PC-3 (cell line): ENCODE measurements at regions of chr3 and their contacts with region 1.

Region 1: GRCh38 chr3:33629219-33629618 is 88.8 kb downstream of the CLASP2 start:
- DNase-seq: no peak
- ATAC-seq: no peak
- H3K4me3 ChIP-seq: no peak overlapping the region
- H3K27ac ChIP-seq: no peak overlapping the region
- H3K4me1 ChIP-seq: no peaks in the 10 kb centered on the region
- H3K27me3 ChIP-seq: no peaks in the 10 kb centered on the region
- CTCF ChIP-seq: no peak

Region 2: GRCh38 chr3:33578325-33579177 is 50.7 kb before region 1 on chr3:
- CTCF ChIA-PET with region 1: no interaction called
- POLR2A ChIA-PET with region 1: no interaction called
- intact Hi-C with region 1: loop called (anchors 5 kb)
- DNase-seq: peak; percentile 90
- ATAC-seq: peak; percentile 66
- H3K4me3 ChIP-seq: peak overlapping the region; percentile 51
- H3K27ac ChIP-seq: peak overlapping the region; percentile 99
- H3K4me1 ChIP-seq: peaks cover 62% of the 10 kb centered on the region
- H3K27me3 ChIP-seq: no peaks in the 10 kb centered on the region
- CTCF ChIP-seq: no peak

Region 3: DNA sequence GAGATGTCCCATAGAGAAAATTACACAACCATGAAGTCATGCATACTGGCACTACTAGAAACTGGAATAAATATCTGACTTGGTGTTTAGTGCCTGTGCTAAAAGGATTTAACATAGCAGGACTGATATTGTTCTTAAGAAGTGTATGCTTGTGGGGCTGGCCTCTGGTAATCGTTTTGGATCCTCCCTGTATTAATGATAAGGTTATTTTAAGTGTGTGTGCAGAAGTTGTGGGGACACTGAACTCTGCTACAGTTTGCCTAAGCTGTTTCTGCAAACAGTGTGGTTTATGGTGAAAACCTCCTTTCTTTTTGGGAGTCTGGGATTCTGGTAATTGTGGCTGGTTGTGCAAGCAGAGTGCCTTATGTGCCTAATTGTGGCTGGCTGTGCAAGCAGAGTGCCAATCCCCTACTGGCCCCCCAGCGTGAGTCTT is 31.9 kb before region 1 on chr3:
- CTCF ChIA-PET with region 1: no interaction called
- POLR2A ChIA-PET with region 1: no interaction called
- intact Hi-C with region 1: no loop called
- DNase-seq: no peak
- ATAC-seq: peak; percentile 14; the same call in 1 of the 2 replicates
- H3K4me3 ChIP-seq: no peak overlapping the region
- H3K27ac ChIP-seq: no peak overlapping the region
- H3K4me1 ChIP-seq: no peaks in the 10 kb centered on the region
- H3K27me3 ChIP-seq: no peaks in the 10 kb centered on the region
- CTCF ChIP-seq: no peak